Uterus (tissue), 4 donors: ENCODE measurements at regions of chr1 and their contacts with region 1.

Region 1: GRCh38 chr1:154884869-154885701 is 15.0 kb upstream of the KCNN3 start:
- DNase-seq: no peak
- H3K4me3 ChIP-seq: no peak overlapping the region
- H3K27ac ChIP-seq: peak overlapping the region; percentile 7 to 46
- H3K4me1 ChIP-seq: no peaks in the 10 kb centered on the region
- H3K27me3 ChIP-seq: no peaks in the 10 kb centered on the region
- CTCF ChIP-seq: no peak
- POLR2A ChIP-seq: no peak

Region 2: DNA sequence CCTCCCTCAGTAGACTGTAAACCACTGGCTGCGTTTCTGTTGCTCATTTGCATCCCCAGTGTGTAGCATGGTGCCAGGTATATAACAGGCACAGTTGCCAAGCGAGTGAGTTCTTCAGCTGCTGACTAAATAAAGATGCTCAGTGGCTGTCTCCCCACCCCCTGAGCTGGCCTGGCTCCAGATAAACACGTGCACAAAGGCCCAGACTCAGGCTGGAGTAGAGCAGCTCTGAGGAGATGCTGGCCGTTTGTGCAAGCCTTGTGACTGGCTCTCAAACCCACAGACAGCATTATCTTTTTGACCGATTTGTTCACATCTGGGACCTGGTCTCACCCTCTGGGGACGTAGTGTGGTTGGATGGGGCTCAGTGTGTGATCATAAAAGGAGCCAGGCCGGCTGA is 310.4 kb before region 1 on chr1:
- intact Hi-C with region 1: loop called (anchors 10 kb)
- DNase-seq: no peak
- H3K4me3 ChIP-seq: no peak overlapping the region
- H3K27ac ChIP-seq: no peak overlapping the region
- H3K4me1 ChIP-seq: no peaks in the 10 kb centered on the region
- H3K27me3 ChIP-seq: no peaks in the 10 kb centered on the region
- CTCF ChIP-seq: no peak
- POLR2A ChIP-seq: no peak

Region 3: GRCh38 chr1:154669464-154670282 is 215.4 kb before region 1 on chr1:
- intact Hi-C with region 1: loop called (anchors 2 kb)
- DNase-seq: peak; percentile 77 to 83
- H3K4me3 ChIP-seq: no peak overlapping the region
- H3K27ac ChIP-seq: no peak overlapping the region
- H3K4me1 ChIP-seq: no peaks in the 10 kb centered on the region
- H3K27me3 ChIP-seq: no peaks in the 10 kb centered on the region
- CTCF ChIP-seq: peak; percentile 80 to 92 (median 88)
- POLR2A ChIP-seq: no peak